Esophagus muscularis mucosa (tissue), 4 donors: ENCODE measurements at regions of chrX and their contacts with region 1.

Region 1: DNA sequence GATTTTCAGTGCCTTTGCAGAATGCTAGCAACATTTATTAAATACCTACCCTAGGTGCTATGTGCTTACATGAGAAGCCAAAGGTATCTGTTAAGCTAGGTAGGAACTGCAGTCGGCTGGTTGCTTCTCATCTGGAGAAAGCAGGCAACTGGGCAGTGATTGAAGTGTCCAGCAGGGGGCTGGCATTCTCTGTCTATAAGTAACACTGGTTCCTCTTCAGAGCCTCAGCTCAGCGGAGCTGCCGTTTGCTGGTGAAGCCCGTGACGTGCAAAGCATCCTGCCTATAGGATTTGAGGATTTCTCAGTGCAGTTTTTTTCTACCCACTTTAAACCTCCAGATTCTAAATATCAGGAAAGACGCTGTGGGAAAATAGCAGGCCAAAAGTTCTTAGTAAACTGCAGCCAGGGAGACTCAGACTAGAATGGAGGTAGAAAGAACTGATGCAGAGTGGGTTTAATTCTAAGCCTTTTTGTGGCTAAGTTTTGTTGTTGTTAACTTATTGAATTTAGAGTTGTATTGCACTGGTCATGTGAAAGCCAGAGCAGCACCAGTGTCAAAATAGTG is at the start of gene GRPR:
- DNase-seq: peak; percentile 90
- H3K4me3 ChIP-seq: peak within 1 kb of the TSS; percentile 34 to 54 (median 44)
- H3K27ac ChIP-seq: peak within 1 kb of the TSS in 3 of 4 donors; percentile 39 to 47 (median 41)
- H3K4me1 ChIP-seq: no peaks in the 10 kb centered on the region
- H3K27me3 ChIP-seq: no peaks in the 10 kb centered on the region
- CTCF ChIP-seq: peak; percentile 65 to 78 (median 71)
- EP300 ChIP-seq: no peak
- POLR2A ChIP-seq: no peak
- total RNA-seq, gene GRPR: 7.8 to 15.0 (median 12.4) TPM

Region 2: GRCh38 chrX:16212436-16212835 is 89.1 kb after region 1 on chrX:
- intact Hi-C with region 1: loop called (anchors 5 kb)
- DNase-seq: no peak
- H3K4me3 ChIP-seq: no peak overlapping the region
- H3K27ac ChIP-seq: no peak overlapping the region
- H3K4me1 ChIP-seq: no peaks in the 10 kb centered on the region
- H3K27me3 ChIP-seq: no peaks in the 10 kb centered on the region
- CTCF ChIP-seq: peak in 1 of 3 experiments; percentile 23
- EP300 ChIP-seq: no peak
- POLR2A ChIP-seq: no peak

Region 3: DNA sequence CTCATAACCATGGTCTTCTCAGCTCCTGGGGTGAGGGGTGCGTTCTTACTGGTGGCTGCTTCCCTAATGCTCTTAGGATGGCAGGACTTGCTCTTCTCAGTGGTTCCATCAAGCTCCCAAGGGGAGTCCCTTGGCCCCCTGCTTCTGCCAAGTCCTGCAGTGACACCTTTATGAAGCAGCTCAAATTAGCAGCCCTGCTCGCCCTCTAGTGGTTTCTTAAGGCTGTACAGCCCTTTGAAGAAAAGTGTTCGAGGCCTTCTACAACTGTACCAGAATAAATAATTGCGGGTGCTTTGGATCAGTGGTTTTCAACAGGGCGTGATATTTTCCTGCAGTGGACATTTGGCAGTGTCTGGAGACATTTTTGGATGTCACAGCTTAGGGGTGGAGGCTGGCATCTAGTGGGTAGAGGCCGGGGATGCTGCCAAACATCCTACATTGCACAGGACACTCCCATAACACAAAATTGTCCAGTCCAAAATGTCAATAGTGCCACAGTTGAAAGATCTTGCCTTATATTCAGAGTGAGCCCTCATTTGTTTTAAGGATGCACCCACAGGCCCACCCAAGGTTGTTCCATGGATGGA is 322.0 kb after region 1 on chrX:
- intact Hi-C with region 1: loop called (anchors 5 kb)
- DNase-seq: no peak
- H3K4me3 ChIP-seq: no peak overlapping the region
- H3K27ac ChIP-seq: no peak overlapping the region
- H3K4me1 ChIP-seq: no peaks in the 10 kb centered on the region
- H3K27me3 ChIP-seq: no peaks in the 10 kb centered on the region
- CTCF ChIP-seq: peak; percentile 48 to 65 (median 59)
- EP300 ChIP-seq: no peak
- POLR2A ChIP-seq: no peak

Region 4: GRCh38 chrX:16695079-16695676 is 571.9 kb after region 1 on chrX:
- intact Hi-C with region 1: loop called (anchors 5 kb)
- DNase-seq: no peak
- H3K4me3 ChIP-seq: no peak overlapping the region
- H3K27ac ChIP-seq: no peak overlapping the region
- H3K4me1 ChIP-seq: no peaks in the 10 kb centered on the region
- H3K27me3 ChIP-seq: no peaks in the 10 kb centered on the region
- CTCF ChIP-seq: peak; percentile 85 to 92 (median 86)
- EP300 ChIP-seq: no peak
- POLR2A ChIP-seq: no peak